Caco-2 (cell line): ENCODE measurements at regions of chr2 and their contacts with region 1.

Region 1: GRCh38 chr2:209977386-209978239 is 24.8 kb upstream of the RPE start:
- DNase-seq: peak in 1 of 2 experiments; percentile 36
- H3K4me3 ChIP-seq: no peak overlapping the region
- H3K4me3 Mint-ChIP-seq: no peak overlapping the region
- H3K27ac Mint-ChIP-seq: no peak overlapping the region
- H3K4me1 ChIP-seq: no peaks in the 10 kb centered on the region
- H3K4me1 Mint-ChIP-seq: no peaks in the 10 kb centered on the region
- H3K27me3 ChIP-seq: no peaks in the 10 kb centered on the region
- H3K27me3 Mint-ChIP-seq: peaks cover 9% of the 10 kb centered on the region
- CTCF ChIP-seq: peak; percentile 37 to 53

Region 2: DNA sequence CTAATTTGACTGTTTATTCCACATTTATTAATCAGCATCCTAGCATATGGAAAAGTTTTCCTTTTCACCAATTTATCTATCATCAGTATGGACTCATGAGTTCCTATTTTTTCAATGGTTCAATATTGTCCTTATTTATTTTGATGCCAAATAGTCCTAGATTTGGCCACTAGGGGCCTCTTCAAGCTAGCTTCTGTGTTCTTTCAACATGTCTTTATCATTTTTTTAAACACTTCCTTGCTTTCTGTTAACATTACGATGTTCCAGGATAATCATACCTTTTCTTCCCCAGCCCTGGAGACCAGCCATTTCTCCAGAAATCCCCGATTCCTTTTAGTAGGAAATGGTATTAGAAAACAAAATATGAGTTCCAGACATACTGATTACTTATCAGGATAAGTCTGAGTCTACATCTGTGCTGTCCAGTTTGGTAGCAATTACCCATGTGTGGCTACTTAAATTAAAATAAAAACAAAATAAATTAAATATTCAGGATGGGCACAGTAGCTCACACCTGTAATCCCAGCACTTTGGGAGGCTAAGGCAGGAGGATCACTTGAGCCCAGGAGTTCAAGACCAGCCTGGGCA is 95.4 kb after region 1 on chr2:
- CTCF ChIA-PET with region 1: no interaction called
- POLR2A ChIA-PET with region 1: no interaction called
- intact Hi-C with region 1: loop called (anchors 5 kb)
- DNase-seq: peak in 1 of 2 experiments; percentile 26
- H3K4me3 ChIP-seq: no peak overlapping the region
- H3K4me3 Mint-ChIP-seq: no peak overlapping the region
- H3K27ac Mint-ChIP-seq: no peak overlapping the region
- H3K4me1 ChIP-seq: peaks cover 8% of the 10 kb centered on the region; the same call in 1 of the 2 replicates
- H3K4me1 Mint-ChIP-seq: peaks cover 6% of the 10 kb centered on the region
- H3K27me3 ChIP-seq: no peaks in the 10 kb centered on the region
- H3K27me3 Mint-ChIP-seq: no peaks in the 10 kb centered on the region
- CTCF ChIP-seq: peak; percentile 29 to 69